ENCODE measurements at regions of chr1 and their contacts with region 1.

Region 1: DNA sequence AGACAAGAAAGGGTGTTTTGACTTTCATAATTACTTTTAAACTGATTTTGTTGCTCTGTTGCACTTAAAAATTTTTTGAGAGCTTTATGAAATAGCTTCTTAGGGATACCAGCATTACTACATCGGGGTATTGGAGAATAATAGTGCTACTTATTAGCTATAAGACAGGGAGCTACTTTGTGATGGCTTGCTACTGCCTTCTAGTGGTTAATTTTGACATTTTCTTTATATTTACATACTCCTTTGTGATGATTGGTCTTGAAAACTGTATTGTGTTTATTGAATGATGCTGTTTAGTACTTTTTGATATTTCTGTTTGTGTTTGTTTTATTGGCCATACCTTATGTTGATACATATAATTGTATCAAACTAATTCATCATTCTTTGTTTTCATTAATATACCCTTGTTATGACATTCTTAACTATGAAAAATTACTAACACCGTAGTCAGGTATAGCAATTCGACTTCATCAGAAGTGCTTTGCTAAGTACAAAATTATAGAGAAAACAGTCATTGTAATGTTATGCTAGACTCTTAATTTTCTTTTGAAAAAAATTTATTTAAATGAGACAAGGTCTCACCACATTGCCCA is 85.5 kb downstream of the CLIC4 start:
- DNase-seq: no peak
- ATAC-seq: peak; percentile 51
- H3K4me3 Mint-ChIP-seq: no peak overlapping the region
- H3K27ac Mint-ChIP-seq: no peak overlapping the region
- H3K4me1 Mint-ChIP-seq: no peaks in the 10 kb centered on the region
- H3K27me3 Mint-ChIP-seq: peaks cover 7% of the 10 kb centered on the region

Region 2: DNA sequence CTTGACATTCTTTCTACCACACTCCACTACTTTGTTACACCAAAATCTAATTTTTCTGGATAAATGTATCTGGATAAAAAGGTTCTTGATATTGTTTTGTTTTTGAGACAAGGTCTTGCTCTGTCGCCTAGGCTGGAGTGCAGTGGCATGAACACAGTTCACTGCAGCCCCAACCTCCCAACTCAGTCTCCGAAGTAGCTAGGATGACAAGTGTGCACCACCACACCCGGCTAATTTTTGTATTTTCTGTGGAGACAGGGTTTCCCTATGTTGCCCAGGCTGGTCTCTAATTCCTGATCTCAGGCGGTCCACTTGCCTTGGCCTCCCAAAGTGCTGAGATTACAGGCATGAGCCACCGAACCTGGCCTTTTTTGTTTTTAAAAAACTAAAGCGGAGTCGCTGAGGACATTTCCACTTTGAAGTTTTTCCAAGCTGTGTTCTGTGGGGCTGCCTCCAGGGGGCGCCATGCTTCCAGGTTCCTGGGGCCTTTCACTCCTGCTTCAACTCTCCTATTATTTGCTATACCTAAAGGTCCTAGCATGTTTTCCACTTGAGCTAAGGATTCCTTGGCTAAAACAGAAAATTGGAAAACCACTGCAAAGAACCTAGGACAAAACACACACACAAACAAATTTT is 288.9 kb before region 1 on chr1:
- CTCF ChIA-PET with region 1: interaction called, 10 read pairs
- POLR2A ChIA-PET with region 1: no interaction called
- DNase-seq: peak; percentile 50
- ATAC-seq: no peak
- H3K4me3 Mint-ChIP-seq: no peak overlapping the region
- H3K27ac Mint-ChIP-seq: no peak overlapping the region
- H3K4me1 Mint-ChIP-seq: peaks cover 60% of the 10 kb centered on the region
- H3K27me3 Mint-ChIP-seq: no peaks in the 10 kb centered on the region

Region 3: GRCh38 chr1:24688621-24689195 is 142.1 kb before region 1 on chr1:
- CTCF ChIA-PET with region 1: interaction called, 240 read pairs
- POLR2A ChIA-PET with region 1: no interaction called
- DNase-seq: peak; percentile 67
- ATAC-seq: peak; percentile 77
- H3K4me3 Mint-ChIP-seq: no peak overlapping the region
- H3K27ac Mint-ChIP-seq: no peak overlapping the region
- H3K4me1 Mint-ChIP-seq: no peaks in the 10 kb centered on the region
- H3K27me3 Mint-ChIP-seq: no peaks in the 10 kb centered on the region

Region 4: DNA sequence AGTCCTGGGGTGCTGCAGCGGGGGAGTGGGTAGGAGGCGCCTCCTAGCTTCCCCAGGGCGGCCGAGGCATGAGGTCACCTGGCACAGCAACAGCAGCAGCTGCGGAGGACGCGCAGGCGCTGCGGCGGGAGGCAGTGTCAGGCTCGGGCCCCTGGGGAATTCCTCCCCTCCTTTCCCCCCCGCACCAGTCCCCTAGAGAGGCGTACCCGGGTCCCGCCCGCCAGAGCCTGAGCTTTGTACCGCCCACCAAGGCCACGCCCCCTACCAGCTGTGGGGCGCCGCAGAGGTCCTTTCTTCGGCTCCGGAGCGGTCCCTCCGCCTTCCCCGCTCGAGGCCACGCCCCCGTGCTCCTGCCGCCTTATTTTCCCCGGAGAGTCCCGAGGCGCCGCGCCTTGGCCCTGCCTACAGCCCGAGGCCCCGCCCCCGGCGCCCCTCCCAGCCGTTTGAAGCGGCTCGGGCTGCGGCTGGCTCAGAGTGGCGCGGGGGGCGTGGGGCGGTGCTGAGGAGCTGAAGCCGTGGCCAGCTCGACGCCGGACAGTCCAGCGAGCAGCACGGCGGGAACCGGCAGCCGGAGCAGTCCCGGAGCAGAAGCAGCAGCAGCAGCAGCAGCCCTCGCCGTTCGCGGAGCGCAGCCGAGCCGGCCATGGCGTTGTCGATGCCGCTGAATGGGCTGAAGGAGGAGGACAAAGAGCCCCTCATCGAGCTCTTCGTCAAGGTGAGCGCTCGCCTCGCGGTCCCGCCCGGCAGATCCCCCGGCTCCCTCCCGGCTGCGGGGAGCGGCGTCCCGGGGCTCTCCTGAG is 85.7 kb before region 1 on chr1 and contains the start of gene CLIC4:
- CTCF ChIA-PET with region 1: interaction called, 13 read pairs
- POLR2A ChIA-PET with region 1: no interaction called
- DNase-seq: peak; percentile 100
- ATAC-seq: peak; percentile 91
- H3K4me3 Mint-ChIP-seq: peak within 1 kb of the TSS; percentile 83
- H3K27ac Mint-ChIP-seq: peak within 1 kb of the TSS; percentile 55
- H3K4me1 Mint-ChIP-seq: peaks cover 41% of the 10 kb centered on the region
- H3K27me3 Mint-ChIP-seq: peaks cover 28% of the 10 kb centered on the region
- total RNA-seq, gene CLIC4: 7.1 to 7.7 TPM

Region 5: GRCh38 chr1:25204797-25205480 is 374.2 kb after region 1 on chr1:
- CTCF ChIA-PET with region 1: interaction called, 15 read pairs
- POLR2A ChIA-PET with region 1: no interaction called
- DNase-seq: peak; percentile 43
- ATAC-seq: no peak
- H3K4me3 Mint-ChIP-seq: no peak overlapping the region
- H3K27ac Mint-ChIP-seq: no peak overlapping the region
- H3K4me1 Mint-ChIP-seq: no peaks in the 10 kb centered on the region
- H3K27me3 Mint-ChIP-seq: peaks cover 21% of the 10 kb centered on the region

Measured in activated CD8-positive, alpha-beta T cell treated with anti-CD3 and anti-CD28 coated beads, Interleukin-2, amount 10 ng/mL, durations not matched to agents 7 days and 5 days (primary cell).